ENCODE measurements at regions of chr11 and their contacts with region 1.

Region 1: GRCh38 chr11:110195845-110196754 is 100.3 kb downstream of the RDX start:
- DNase-seq: no peak
- ATAC-seq: no peak
- H3K4me3 ChIP-seq: no peak overlapping the region
- H3K27ac ChIP-seq: no peak overlapping the region
- H3K4me1 ChIP-seq: no peaks in the 10 kb centered on the region
- H3K27me3 ChIP-seq: no peaks in the 10 kb centered on the region
- CTCF ChIP-seq: no peak

Region 2: DNA sequence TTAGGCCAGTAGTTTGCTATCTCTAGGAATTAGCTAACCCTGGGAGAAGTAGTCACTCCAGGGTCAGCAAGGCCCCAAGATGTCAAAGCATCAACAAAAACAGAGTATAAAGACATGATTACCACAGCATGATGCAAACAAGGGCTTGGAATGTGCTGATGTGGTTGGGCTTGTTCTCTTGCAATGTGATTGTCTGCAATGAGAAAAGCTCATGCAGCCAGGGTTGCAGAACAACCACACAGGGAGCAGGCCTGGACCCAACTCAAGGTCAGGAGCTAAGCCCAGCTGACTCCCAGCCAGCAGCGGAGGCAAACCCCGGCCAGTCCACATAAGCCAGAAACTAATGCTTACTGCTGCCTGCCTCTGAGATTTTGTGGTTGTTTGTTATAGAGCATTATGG is 235.3 kb before region 1 on chr11:
- intact Hi-C with region 1: loop called in 1 of 10 experiments (anchors 10 kb)
- DNase-seq: peak; percentile 49 to 61
- ATAC-seq: peak; percentile 71 to 95 (median 88)
- H3K4me3 ChIP-seq: no peak overlapping the region
- H3K27ac ChIP-seq: peak overlapping the region in 1 of 10 donors; percentile 49
- H3K4me1 ChIP-seq: peaks cover 0 to 11% (median 0%) of the 10 kb centered on the region in 9 donors
- H3K27me3 ChIP-seq: no peaks in the 10 kb centered on the region
- CTCF ChIP-seq: no peak

Region 3: GRCh38 chr11:110296226-110297075 is 100.4 kb after region 1 on chr11 and contains the start of gene RDX:
- intact Hi-C with region 1: no loop called
- DNase-seq: peak; percentile 67 to 82
- ATAC-seq: peak; percentile 80 to 94 (median 90)
- H3K4me3 ChIP-seq: peak within 1 kb of the TSS; percentile 57 to 99 (median 86)
- H3K27ac ChIP-seq: peak within 1 kb of the TSS; percentile 89 to 99 (median 98)
- H3K4me1 ChIP-seq: peaks cover 4 to 52% (median 38%) of the 10 kb centered on the region in 9 donors
- H3K27me3 ChIP-seq: no peaks in the 10 kb centered on the region
- CTCF ChIP-seq: peak in 3 of 9 donors; percentile 14 to 37 (median 16)
- total RNA-seq, gene RDX: 105 to 140 (median 127) TPM

Region 4: DNA sequence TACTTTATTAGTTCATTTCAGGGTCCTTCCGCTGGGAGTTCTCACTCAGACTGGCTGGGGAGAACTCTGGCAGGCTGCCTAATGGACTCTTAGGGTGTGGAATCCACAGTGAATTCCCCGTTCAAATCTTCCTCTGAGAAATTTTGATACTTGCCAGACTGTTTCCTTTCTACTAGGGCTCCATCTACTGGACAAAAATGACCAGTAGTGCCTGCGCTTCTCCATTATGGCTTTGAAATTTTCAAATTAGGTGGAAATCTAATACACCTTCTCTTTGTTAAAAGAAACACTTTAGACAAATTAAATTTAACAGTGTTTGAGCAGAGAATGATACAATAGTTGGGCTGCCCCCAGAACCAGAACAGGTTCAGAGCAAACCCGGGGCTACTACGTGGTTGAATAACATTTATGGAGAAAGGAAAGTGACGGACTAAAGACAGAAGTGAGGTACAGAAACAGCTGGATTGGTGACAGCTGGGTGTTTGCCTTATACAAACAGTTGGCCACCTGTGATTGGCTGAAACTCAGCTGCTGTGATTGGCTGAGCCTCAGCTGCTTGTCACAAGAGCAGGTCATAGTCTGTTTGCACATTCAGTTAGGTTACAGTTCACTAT is 180.7 kb after region 1 on chr11:
- intact Hi-C with region 1: loop called in 6 of 10 experiments (anchors 2 to 5 kb)
- DNase-seq: peak; percentile 51 to 85
- ATAC-seq: peak; percentile 68 to 92 (median 86)
- H3K4me3 ChIP-seq: peak overlapping the region in 4 of 10 donors; percentile 12 to 23 (median 20)
- H3K27ac ChIP-seq: peak overlapping the region in 7 of 10 donors; percentile 2 to 60 (median 34)
- H3K4me1 ChIP-seq: peaks cover 0 to 36% (median 13%) of the 10 kb centered on the region in 9 donors
- H3K27me3 ChIP-seq: no peaks in the 10 kb centered on the region
- CTCF ChIP-seq: peak; percentile 63 to 93 (median 83)

Region 5: GRCh38 chr11:110435780-110436717 is 239.9 kb after region 1 on chr11:
- intact Hi-C with region 1: loop called in 7 of 10 experiments (anchors 2 to 5 kb)
- DNase-seq: no peak
- ATAC-seq: peak in 3 of 8 donors; percentile 41 to 77 (median 60)
- H3K4me3 ChIP-seq: no peak overlapping the region
- H3K27ac ChIP-seq: peak overlapping the region in 1 of 10 donors; percentile 11
- H3K4me1 ChIP-seq: peaks cover 0 to 58% (median 36%) of the 10 kb centered on the region in 9 donors
- H3K27me3 ChIP-seq: no peaks in the 10 kb centered on the region
- CTCF ChIP-seq: no peak

Region 6: DNA sequence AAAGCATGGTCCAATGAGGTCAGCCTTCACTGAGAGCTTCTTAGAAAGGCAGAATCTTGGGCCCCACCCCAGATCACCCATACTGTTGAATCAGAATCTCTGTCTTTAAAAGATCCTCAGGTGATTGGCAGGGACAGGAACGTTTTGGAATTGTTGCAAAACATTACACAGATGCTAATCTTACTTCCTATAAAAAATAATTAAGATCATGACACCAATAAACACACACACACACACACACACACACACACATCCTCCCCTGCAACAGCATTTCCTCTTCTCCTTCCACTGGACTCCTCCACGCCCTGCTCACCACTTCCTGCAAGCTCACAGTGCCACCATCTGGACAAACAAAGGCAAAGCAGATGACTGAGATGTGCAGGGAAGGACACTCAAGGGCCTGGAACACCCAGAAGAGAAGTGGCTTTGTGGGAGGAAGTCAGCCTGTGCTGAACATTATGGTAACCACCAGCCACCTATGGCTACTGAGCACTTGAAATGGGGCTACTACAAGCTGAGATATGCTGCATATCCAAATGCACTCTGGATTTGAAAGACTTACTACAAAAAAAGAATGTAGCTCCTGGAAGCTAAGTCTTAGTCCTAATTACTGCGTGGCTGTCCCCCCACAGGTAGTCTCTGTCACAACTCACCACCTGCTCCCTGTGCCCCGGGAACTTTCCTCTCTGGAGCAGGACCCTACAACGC is 1250.5 kb after region 1 on chr11:
- intact Hi-C with region 1: loop called in 1 of 10 experiments (anchors 10 kb)
- DNase-seq: peak; percentile 48 to 86
- ATAC-seq: peak; percentile 88 to 97 (median 96)
- H3K4me3 ChIP-seq: no peak overlapping the region
- H3K27ac ChIP-seq: peak overlapping the region in 5 of 10 donors; percentile 2 to 44 (median 21)
- H3K4me1 ChIP-seq: peaks cover 0 to 18% (median 12%) of the 10 kb centered on the region in 9 donors
- H3K27me3 ChIP-seq: peaks cover 0 to 11% (median 0%) of the 10 kb centered on the region in 7 donors
- CTCF ChIP-seq: peak; percentile 43 to 88 (median 77)

Measured in heart right ventricle (tissue), 16 donors.